Breast epithelium (tissue), 4 donors: ENCODE measurements at regions of chr7 and their contacts with region 1.

Region 1: GRCh38 chr7:44508328-44509030 is 18.0 kb upstream of the NUDCD3 start:
- DNase-seq: no peak
- H3K4me3 ChIP-seq: no peak overlapping the region
- H3K27ac ChIP-seq: no peak overlapping the region
- H3K4me1 ChIP-seq: no peaks in the 10 kb centered on the region
- H3K27me3 ChIP-seq: no peaks in the 10 kb centered on the region
- CTCF ChIP-seq: no peak
- POLR2A ChIP-seq: no peak

Region 2: GRCh38 chr7:42972699-42973500 is 1535.6 kb before region 1 on chr7:
- intact Hi-C with region 1: no loop called
- DNase-seq: no peak
- H3K4me3 ChIP-seq: no peak overlapping the region
- H3K27ac ChIP-seq: peak overlapping the region in 1 of 2 donors; percentile 61
- H3K4me1 ChIP-seq: no peaks in the 10 kb centered on the region
- H3K27me3 ChIP-seq: no peaks in the 10 kb centered on the region
- CTCF ChIP-seq: no peak
- POLR2A ChIP-seq: no peak

Region 3: GRCh38 chr7:43921423-43921822 is 587.1 kb before region 1 on chr7:
- intact Hi-C with region 1: loop called (anchors 5 kb)
- DNase-seq: no peak
- H3K4me3 ChIP-seq: no peak overlapping the region
- H3K27ac ChIP-seq: no peak overlapping the region
- H3K4me1 ChIP-seq: no peaks in the 10 kb centered on the region
- H3K27me3 ChIP-seq: no peaks in the 10 kb centered on the region
- CTCF ChIP-seq: no peak
- POLR2A ChIP-seq: no peak

Region 4: DNA sequence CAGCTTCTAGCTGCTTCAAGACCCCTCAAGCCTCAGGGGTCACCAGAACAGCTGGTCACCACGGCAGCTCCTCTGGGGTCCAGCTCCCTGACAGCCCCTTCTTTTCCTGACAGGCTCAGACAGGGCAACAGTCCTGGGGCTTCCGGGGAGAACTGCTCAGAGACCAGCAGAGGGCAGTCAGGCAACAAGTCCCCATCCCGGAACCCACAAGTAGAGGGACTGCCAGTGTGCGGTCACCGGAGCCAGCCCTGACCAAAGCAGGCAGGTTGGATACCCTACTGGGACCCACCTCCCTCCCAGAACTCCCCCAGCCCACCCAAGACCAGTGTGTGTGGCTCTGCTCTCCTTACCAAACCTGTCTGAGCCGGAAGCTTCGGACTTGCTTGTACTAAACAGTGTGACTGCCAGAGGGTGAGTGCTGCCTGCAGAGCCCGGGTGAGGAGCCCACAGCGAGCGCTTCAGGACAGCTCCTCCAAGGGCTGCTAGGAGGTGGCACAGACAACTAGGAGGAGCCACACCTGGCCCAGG is 267.4 kb before region 1 on chr7:
- intact Hi-C with region 1: loop called (anchors 10 kb)
- DNase-seq: peak; percentile 63 to 72
- H3K4me3 ChIP-seq: peak overlapping the region in 2 of 3 donors; percentile 17 to 53
- H3K27ac ChIP-seq: peak overlapping the region in 1 of 2 donors; percentile 23
- H3K4me1 ChIP-seq: no peaks in the 10 kb centered on the region
- H3K27me3 ChIP-seq: no peaks in the 10 kb centered on the region
- CTCF ChIP-seq: peak; percentile 19 to 76 (median 69)
- POLR2A ChIP-seq: no peak

Region 5: DNA sequence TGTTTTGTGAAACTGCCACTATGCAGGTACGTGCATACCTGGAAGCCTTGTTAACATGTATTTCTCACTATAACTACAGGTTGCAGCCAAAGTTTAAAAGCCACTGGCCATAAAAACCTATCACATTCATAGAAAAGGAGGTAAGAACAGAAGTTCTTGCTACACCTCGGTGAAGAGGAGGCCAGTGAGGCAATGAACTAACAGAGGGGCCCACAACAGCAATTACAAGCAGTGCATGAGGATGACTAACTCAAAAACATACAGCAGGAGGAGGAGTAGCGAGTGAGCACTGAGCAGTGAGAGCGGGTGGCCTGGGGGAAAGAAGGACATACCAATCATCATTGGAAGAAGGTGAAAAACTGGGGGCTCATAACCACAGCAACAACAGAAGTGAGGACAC is 69.7 kb before region 1 on chr7:
- intact Hi-C with region 1: no loop called
- DNase-seq: no peak
- H3K4me3 ChIP-seq: no peak overlapping the region
- H3K27ac ChIP-seq: no peak overlapping the region
- H3K4me1 ChIP-seq: no peaks in the 10 kb centered on the region
- H3K27me3 ChIP-seq: no peaks in the 10 kb centered on the region
- CTCF ChIP-seq: no peak
- POLR2A ChIP-seq: no peak